ENCODE measurements at regions of chr3 and their contacts with region 1.

Region 1: GRCh38 chr3:179421500-179421899 is 29.8 kb downstream of the GNB4 start:
- DNase-seq: peak; percentile 33
- ATAC-seq: peak; percentile 58 to 82

Region 2: GRCh38 chr3:179473565-179473964 is 52.1 kb after region 1 on chr3:
- intact Hi-C with region 1: no loop called
- DNase-seq: no peak
- ATAC-seq: no peak

Region 3: DNA sequence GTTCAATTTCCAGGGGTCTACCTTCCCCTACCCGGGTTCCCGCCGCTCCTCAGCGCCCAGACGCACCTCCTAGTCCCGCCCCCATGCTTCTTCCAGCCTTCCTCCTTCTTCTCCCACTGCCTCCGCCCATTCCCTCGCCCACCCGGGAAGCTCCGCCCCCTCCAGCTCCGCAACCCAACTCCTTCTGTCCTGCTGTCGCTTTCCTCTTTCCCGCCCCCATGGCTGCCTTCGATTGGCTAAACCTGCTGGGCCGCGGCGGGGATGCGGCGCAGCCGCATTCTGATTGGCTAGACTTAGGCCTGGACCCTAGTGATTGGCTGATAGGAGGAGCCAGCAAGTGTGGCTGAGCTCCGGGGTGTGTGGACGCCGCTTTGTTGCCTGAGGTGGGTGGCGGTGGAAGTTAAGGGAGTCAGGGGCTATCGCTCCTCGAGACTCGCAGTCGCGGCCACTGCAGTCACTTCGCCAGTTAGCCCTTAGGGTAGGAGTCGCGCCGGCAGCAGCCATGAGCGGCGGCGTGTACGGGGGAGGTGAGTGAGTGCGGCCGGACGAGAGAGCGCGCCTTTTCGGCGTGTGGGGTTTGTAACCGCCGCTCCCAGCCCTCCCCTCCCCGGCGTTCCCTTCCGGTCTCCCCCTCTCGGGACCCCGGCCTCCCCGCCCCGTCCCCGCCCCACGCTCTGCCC is 141.2 kb after region 1 on chr3 and contains the start of gene ACTL6A:
- intact Hi-C with region 1: loop called (anchors 2 to 5 kb)
- DNase-seq: peak; percentile 100
- ATAC-seq: peak; percentile 99
- total RNA-seq, gene ACTL6A: 23.1 to 27.0 TPM

Measured in left cardiac atrium (tissue), 4 donors.